Activated T-helper 1 cell treated with anti-CD3 and anti-CD28 coated beads, Interleukin-12 subunit alpha, Interleukin-12 subunit beta, Interleukin-2, Interleukin-4 antibody, amounts not matched to agents 30 ng/mL and 10 ng/mL and 1 ng/mL, durations not matched to agents 14 hours and 24 hours and 36 hours (primary cell): ENCODE measurements at regions of chr7 and their contacts with region 1.

Region 1: DNA sequence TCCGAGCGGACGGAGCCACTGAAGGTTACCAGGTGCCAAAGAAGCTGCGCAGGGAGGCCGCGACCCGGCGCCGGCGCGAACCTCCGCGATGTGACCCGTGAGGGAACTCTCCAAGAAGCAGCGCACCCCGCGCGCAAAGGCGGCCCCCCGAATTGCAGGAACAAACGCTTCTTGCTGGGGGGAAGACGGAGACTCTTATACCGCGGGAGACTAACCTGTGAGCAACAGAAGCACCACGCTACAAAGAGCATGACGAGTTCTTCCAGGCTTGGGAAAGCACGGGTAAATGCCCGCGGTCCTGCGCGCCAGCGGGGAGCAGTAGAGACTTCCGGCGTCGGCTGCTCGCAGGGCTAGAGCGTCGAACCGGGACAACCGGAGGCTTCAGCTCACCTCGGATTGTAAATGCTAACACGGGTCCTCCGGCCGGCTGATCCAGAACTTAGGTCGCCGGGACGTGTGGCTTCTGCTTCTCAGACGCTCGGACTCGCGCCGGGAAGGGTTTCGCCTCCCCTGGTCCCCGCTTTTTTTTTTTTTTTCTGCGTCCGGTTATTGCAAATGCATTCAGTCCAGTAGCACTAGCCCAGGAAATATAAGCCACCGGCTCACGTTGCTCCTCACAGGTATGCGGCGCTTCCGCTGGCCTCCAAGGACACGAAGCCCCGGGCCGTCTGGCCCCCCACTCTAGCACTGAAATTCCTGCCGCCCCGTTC is at the start of gene COA1:
- DNase-seq: peak; percentile 76
- H3K4me3 Mint-ChIP-seq: peak within 1 kb of the TSS; percentile 88
- H3K27ac Mint-ChIP-seq: peak within 1 kb of the TSS; percentile 76
- H3K4me1 Mint-ChIP-seq: peaks cover 28% of the 10 kb centered on the region
- H3K27me3 Mint-ChIP-seq: peaks cover 3% of the 10 kb centered on the region
- total RNA-seq, gene COA1: 81.7 and 88.6 TPM in 2 replicates

Region 2: GRCh38 chr7:43742692-43743091 is 13.3 kb after region 1 on chr7:
- intact Hi-C with region 1: no loop called
- DNase-seq: no peak
- H3K4me3 Mint-ChIP-seq: no peak overlapping the region
- H3K27ac Mint-ChIP-seq: no peak overlapping the region
- H3K4me1 Mint-ChIP-seq: no peaks in the 10 kb centered on the region
- H3K27me3 Mint-ChIP-seq: peaks cover 4% of the 10 kb centered on the region

Region 3: GRCh38 chr7:43764807-43765491 is 35.6 kb after region 1 on chr7:
- intact Hi-C with region 1: no loop called
- DNase-seq: no peak
- H3K4me3 Mint-ChIP-seq: no peak overlapping the region
- H3K27ac Mint-ChIP-seq: no peak overlapping the region
- H3K4me1 Mint-ChIP-seq: peaks cover 24% of the 10 kb centered on the region
- H3K27me3 Mint-ChIP-seq: no peaks in the 10 kb centered on the region

Region 4: GRCh38 chr7:43799589-43799988 is 70.2 kb after region 1 on chr7:
- intact Hi-C with region 1: loop called (anchors 5 kb)
- DNase-seq: no peak
- H3K4me3 Mint-ChIP-seq: no peak overlapping the region
- H3K27ac Mint-ChIP-seq: no peak overlapping the region
- H3K4me1 Mint-ChIP-seq: no peaks in the 10 kb centered on the region
- H3K27me3 Mint-ChIP-seq: no peaks in the 10 kb centered on the region